Heart right ventricle (tissue), 16 donors: ENCODE measurements at regions of chr11 and their contacts with region 1.

Region 1: DNA sequence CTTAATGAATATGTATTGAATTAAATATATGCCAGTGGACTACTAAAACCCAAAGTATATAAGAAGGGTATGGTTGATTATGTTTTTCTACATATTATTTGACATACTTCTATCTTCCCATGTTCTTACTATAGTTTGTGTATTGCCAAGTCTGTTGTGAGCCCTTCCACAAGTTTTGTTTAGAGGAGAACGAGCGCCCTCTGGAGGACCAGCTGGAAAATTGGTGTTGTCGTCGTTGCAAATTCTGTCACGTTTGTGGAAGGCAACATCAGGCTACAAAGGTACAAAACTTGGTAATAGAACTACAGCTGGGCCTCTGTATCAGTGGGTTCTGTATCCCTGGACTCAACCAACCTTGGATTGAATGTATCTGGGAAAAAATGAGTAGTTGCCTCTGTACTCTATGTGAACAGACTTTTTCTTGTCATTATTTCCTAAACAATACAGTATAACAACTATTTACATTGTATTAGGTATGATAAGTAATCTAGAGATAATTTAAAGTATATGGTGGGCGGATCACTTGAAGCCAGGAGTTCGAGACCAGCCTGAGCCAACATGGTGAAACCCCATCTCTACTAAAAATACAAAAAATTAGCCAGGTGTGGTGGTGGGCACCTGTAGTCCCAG is 38.7 kb upstream of the TTC36 start:
- DNase-seq: peak; percentile 50 to 61
- ATAC-seq: peak in 7 of 8 donors; percentile 46 to 72 (median 62)
- H3K4me3 ChIP-seq: no peak overlapping the region
- H3K27ac ChIP-seq: no peak overlapping the region
- H3K4me1 ChIP-seq: peaks cover 0 to 9% (median 0%) of the 10 kb centered on the region in 9 donors
- H3K27me3 ChIP-seq: no peaks in the 10 kb centered on the region
- CTCF ChIP-seq: peak; percentile 58 to 90 (median 82)

Region 2: DNA sequence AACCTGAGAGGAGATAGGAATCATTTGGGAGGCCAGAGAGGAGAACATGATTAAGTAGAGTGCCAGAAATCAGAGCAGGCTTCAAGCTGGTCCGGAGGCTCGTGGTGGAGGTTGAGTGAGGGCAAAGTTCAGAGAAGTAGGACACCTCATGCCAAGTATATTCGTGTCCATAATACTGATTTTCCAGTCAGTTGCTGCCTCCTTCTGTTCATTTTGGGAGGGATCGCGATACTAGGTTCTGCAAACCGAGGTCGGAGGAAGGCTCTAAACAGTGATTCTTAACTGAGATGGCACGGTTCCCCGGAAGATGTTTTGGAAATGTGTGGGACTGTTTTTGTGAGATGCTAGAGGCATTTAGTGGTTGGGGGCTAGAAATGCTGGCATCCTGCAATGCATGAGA is 197.7 kb before region 1 on chr11:
- intact Hi-C with region 1: loop called in 3 of 10 experiments (anchors 5 to 10 kb)
- DNase-seq: peak in 1 of 2 donors; percentile 22
- ATAC-seq: peak; percentile 55 to 83 (median 78)
- H3K4me3 ChIP-seq: peak overlapping the region in 1 of 10 donors; percentile 8
- H3K27ac ChIP-seq: no peak overlapping the region
- H3K4me1 ChIP-seq: no peaks in the 10 kb centered on the region
- H3K27me3 ChIP-seq: peaks cover 0 to 6% (median 0%) of the 10 kb centered on the region in 7 donors
- CTCF ChIP-seq: peak in 8 of 9 donors; percentile 11 to 64 (median 55)

Region 3: GRCh38 chr11:118304568-118305248 is 183.9 kb before region 1 on chr11 and contains the start of gene CD3E:
- intact Hi-C with region 1: loop called in 4 of 10 experiments (anchors 5 to 10 kb)
- DNase-seq: no peak
- ATAC-seq: no peak
- H3K4me3 ChIP-seq: peak within 1 kb of the TSS in 1 of 10 donors; percentile 47
- H3K27ac ChIP-seq: peak within 1 kb of the TSS in 1 of 10 donors; percentile 85
- H3K4me1 ChIP-seq: no peaks in the 10 kb centered on the region
- H3K27me3 ChIP-seq: peaks cover 0 to 25% (median 9%) of the 10 kb centered on the region in 7 donors
- CTCF ChIP-seq: no peak
- total RNA-seq, gene CD3E: 0.17 to 12.2 (median 0.59) TPM in 8 of 10 donors, not detected in the others

Region 4: DNA sequence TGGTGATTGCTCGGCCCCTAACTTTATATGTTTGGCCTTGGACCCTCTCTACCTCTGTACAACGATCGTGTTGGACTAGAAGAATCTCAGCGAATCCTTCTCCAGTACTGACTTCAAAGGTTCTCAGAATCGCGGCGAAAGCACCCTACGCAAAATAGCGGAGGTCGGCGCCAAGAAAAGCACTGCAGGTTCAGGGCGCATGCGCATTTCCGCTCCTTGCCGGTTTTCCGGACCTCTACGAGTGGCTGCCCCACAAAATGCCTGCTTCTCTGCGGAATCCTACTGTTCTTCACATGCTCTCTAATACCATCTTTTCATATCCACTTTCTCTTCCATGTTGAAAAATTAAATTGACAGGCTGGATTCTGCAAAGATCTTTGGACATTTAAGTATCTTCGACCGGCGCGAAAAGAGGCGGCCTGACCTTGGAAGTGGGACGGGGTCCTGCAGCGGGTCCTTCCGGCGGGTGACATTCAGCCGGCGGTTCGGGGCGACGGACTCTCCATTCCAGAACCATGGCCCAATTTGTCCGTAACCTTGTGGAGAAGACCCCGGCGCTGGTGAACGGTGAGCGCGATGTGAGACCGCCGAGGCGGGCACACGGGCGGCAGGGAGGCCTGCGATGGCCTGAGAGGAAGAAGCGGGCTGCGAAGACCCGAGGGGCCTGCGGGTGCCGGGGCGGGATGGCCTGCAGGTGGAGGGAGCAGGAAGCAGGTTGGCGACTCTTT is 87.3 kb before region 1 on chr11 and contains the start of gene ATP5MG:
- intact Hi-C with region 1: loop called in 7 of 10 experiments (anchors 2 to 5 kb)
- DNase-seq: peak; percentile 92 to 95
- ATAC-seq: peak; percentile 86 to 94 (median 91)
- H3K4me3 ChIP-seq: peak within 1 kb of the TSS; percentile 61 to 97 (median 88)
- H3K27ac ChIP-seq: peak within 1 kb of the TSS; percentile 88 to 97 (median 94)
- H3K4me1 ChIP-seq: peaks cover 3 to 53% (median 46%) of the 10 kb centered on the region in 9 donors
- H3K27me3 ChIP-seq: no peaks in the 10 kb centered on the region
- CTCF ChIP-seq: peak in 3 of 9 donors; percentile 18 to 42 (median 37)
- total RNA-seq, gene ATP5MG: 482 to 777 (median 688) TPM

Region 5: GRCh38 chr11:118476676-118477075 is 11.9 kb before region 1 on chr11:
- intact Hi-C with region 1: no loop called
- DNase-seq: no peak
- ATAC-seq: no peak
- H3K4me3 ChIP-seq: no peak overlapping the region
- H3K27ac ChIP-seq: no peak overlapping the region
- H3K4me1 ChIP-seq: peaks cover 0 to 9% (median 0%) of the 10 kb centered on the region in 9 donors
- H3K27me3 ChIP-seq: no peaks in the 10 kb centered on the region
- CTCF ChIP-seq: no peak